ENCODE measurements at regions of chr4 and their contacts with region 1.

Region 1: DNA sequence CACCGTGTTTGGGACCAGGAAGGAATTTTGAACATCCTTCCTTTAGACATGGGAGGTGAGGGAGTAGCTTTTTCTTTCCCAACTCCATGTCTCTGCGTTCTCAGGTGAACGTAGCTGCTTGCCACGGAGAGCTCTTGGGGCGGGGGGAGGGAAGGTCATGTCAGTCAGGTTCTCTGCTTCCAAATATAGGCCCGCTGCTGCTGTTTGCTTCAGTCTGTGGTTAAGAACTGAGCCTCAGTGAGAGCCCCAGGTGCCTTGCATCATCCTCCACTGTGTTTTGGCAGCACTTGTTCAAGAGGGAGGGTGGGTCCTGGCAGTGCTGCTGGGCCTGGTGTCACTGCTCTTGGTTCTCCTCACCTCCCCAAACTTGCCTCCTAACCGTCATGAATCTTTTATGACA is 46.5 kb downstream of the HADH start:
- DNase-seq: peak in 8 of 9 donors; percentile 43 to 93 (median 88)
- ATAC-seq: peak; percentile 99
- H3K4me3 ChIP-seq: peak overlapping the region; percentile 41
- H3K4me3 Mint-ChIP-seq: peak overlapping the region; percentile 73 to 87 (median 80)
- H3K27ac ChIP-seq: peak overlapping the region; percentile 78
- H3K27ac Mint-ChIP-seq: peak overlapping the region; percentile 90 to 100 (median 96)
- H3K4me1 ChIP-seq: peaks cover 0 to 55% of the 10 kb centered on the region in 2 donors
- H3K4me1 Mint-ChIP-seq: peaks cover 19 to 81% (median 66%) of the 10 kb centered on the region in 7 donors
- H3K27me3 ChIP-seq: no peaks in the 10 kb centered on the region
- H3K27me3 Mint-ChIP-seq: no peaks in the 10 kb centered on the region

Region 2: DNA sequence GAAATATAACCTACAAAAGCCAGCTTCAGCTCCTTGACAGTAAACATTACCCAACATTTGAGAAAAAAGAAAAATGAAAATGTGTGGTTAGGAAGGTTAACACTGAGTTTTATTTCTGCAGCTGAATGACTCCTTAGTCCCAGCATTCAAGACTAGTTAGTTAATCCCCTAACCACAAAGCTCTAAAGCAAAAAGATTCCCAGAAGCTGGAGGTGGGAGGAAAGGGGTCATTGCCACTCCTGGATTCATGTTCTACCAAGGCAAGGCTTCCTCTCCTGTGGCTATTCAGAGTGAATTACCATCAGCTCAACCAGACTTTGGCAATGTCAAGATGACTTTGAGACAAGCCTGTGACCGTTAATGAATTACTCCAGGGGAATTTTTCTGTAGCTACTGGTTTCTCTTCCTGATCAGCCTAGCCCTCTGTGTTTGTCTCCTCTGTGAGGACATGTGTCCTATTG is 17.1 kb after region 1 on chr4:
- CTCF ChIA-PET with region 1: interaction called, 21 read pairs
- POLR2A ChIA-PET with region 1: interaction called, 9 read pairs
- intact Hi-C with region 1: loop called (anchors 1 to 2 kb)
- DNase-seq: no peak
- ATAC-seq: no peak
- H3K4me3 ChIP-seq: no peak overlapping the region
- H3K4me3 Mint-ChIP-seq: peak overlapping the region; percentile 36 to 84 (median 54)
- H3K27ac ChIP-seq: peak overlapping the region; percentile 66
- H3K27ac Mint-ChIP-seq: peak overlapping the region; percentile 82 to 99 (median 93)
- H3K4me1 ChIP-seq: peaks cover 15 to 82% of the 10 kb centered on the region in 2 donors
- H3K4me1 Mint-ChIP-seq: peaks cover 56 to 100% (median 94%) of the 10 kb centered on the region in 7 donors
- H3K27me3 ChIP-seq: no peaks in the 10 kb centered on the region
- H3K27me3 Mint-ChIP-seq: no peaks in the 10 kb centered on the region

Region 3: GRCh38 chr4:108060164-108060563 is 24.0 kb after region 1 on chr4:
- CTCF ChIA-PET with region 1: interaction called, 21 read pairs
- POLR2A ChIA-PET with region 1: interaction called, 16 read pairs
- intact Hi-C with region 1: no loop called
- DNase-seq: peak in 1 of 9 donors; percentile 17
- ATAC-seq: no peak
- H3K4me3 ChIP-seq: no peak overlapping the region
- H3K4me3 Mint-ChIP-seq: peak overlapping the region in 5 of 10 donors; percentile 13 to 84 (median 64)
- H3K27ac ChIP-seq: peak overlapping the region; percentile 66
- H3K27ac Mint-ChIP-seq: peak overlapping the region in 8 of 9 donors; percentile 78 to 99 (median 90)
- H3K4me1 ChIP-seq: peaks cover 0 to 87% of the 10 kb centered on the region in 2 donors
- H3K4me1 Mint-ChIP-seq: peaks cover 33 to 99% (median 92%) of the 10 kb centered on the region in 7 donors
- H3K27me3 ChIP-seq: no peaks in the 10 kb centered on the region
- H3K27me3 Mint-ChIP-seq: no peaks in the 10 kb centered on the region